Activated CD4-positive, alpha-beta T cell treated with anti-CD3 and anti-CD28 coated beads for 36 hours (primary cell): ENCODE measurements at regions of chr19 and their contacts with region 1.

Region 1: DNA sequence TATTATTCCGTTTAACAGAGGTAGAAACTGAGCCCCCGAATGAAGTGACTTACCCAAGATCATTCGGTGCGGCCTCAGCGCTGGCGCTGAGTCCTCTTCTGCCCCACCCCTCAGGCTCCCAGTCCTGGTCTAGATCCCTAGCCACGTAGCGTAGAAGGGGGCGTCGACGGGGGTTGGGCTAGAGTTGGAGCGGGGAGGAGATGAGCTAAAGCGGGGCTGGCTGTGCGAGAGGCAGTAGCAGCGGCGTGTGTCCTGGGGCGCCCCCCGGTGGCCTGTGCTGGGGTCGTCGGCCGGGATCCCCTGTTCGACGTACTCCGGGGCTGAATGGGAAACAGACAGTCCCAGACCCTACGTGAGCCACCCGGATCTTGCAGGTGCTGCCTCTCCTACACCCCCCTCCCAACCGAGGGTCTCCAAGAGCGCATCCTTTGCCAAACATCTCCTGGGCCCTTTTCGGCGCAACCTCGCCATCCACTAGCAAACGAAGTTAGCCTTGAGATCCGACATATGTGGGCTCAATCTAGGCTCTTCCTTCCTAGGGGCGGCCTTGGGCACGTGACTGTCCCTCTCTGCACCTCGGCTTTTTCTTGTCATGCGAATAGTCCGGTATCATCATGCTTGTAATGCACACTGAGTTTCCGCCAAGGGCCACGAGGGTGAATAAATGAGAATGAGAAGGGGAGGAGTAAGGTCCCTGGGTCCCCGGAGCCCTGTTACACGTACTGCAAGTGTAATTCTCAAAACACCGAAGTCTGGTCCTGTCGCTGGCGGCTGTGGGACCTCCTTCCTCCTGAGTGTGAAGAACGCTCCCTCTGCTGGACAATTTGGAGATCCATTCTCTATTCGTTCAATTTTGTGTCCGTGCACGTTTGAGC is 47.7 kb downstream of the CYP4F22 start:
- DNase-seq: peak; percentile 99
- ATAC-seq: peak; percentile 86
- H3K4me3 Mint-ChIP-seq: peak overlapping the region; percentile 73
- H3K27ac Mint-ChIP-seq: peak overlapping the region; percentile 85
- H3K4me1 Mint-ChIP-seq: peaks cover 18% of the 10 kb centered on the region
- H3K27me3 Mint-ChIP-seq: peaks cover 2% of the 10 kb centered on the region

Region 2: GRCh38 chr19:15177269-15178116 is 378.5 kb before region 1 on chr19:
- CTCF ChIA-PET with region 1: interaction called, 3 read pairs
- POLR2A ChIA-PET with region 1: no interaction called
- intact Hi-C with region 1: loop called (anchors 1 kb)
- DNase-seq: peak; percentile 92
- ATAC-seq: peak; percentile 98
- H3K4me3 Mint-ChIP-seq: peak overlapping the region; percentile 7
- H3K27ac Mint-ChIP-seq: no peak overlapping the region
- H3K4me1 Mint-ChIP-seq: peaks cover 4% of the 10 kb centered on the region
- H3K27me3 Mint-ChIP-seq: peaks cover 13% of the 10 kb centered on the region

Region 3: DNA sequence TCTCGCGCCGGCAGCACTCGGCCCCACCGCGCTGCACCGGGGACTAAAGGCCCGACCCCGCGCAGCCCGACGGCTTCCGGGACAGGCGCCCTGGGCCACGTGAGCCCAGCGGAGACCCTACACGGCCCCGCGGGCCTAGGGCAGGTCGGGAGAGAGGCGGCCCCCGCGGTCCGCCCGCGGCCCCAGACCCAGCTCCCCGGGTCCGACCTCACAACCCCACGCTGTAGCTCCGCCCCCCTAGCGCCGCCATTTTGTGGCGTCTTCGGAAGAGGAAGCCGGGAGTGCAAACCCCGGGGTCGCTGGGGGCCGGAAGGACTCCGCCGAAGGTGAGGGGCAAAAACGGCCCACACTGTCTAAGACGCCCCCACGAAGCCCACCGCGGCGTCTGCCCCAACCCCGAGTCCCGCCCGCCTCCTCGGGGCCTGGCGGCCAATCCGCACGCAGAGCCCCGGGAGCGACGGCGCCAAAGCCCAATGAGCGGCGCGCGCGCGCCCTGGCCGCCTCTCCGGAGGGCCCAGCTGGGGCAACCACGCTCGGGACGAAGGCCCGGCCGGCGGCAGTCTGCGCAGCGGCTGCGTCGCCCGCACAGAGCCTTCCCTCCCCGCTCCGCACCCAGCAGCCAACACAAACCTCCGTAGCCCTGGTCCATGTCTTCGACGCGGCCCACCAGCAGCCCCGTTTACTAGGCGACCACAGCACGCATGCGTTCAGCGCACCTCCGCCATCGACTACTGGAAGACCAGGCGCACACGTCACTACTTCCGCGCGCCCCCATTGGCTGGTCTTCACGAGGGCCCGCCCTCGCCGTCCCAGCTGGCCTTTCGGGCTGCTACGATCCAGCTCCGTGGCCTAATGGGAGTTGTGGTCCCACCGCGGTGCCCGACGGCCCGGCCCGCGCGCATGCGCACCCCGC is 176.7 kb before region 1 on chr19 and contains the start of gene AKAP8:
- CTCF ChIA-PET with region 1: interaction called, 22 read pairs
- POLR2A ChIA-PET with region 1: interaction called, 3 read pairs
- intact Hi-C with region 1: loop called (anchors 1 kb)
- DNase-seq: peak; percentile 99
- ATAC-seq: peak; percentile 91
- H3K4me3 Mint-ChIP-seq: peak within 1 kb of the TSS; percentile 88
- H3K27ac Mint-ChIP-seq: peak within 1 kb of the TSS; percentile 100
- H3K4me1 Mint-ChIP-seq: peaks cover 37% of the 10 kb centered on the region
- H3K27me3 Mint-ChIP-seq: no peaks in the 10 kb centered on the region
- total RNA-seq, gene AKAP8: 47.9 to 54.3 TPM

Region 4: GRCh38 chr19:15449620-15450527 is 106.1 kb before region 1 on chr19 and contains the start of gene WIZ:
- CTCF ChIA-PET with region 1: interaction called, 15 read pairs
- POLR2A ChIA-PET with region 1: interaction called, 3 read pairs
- intact Hi-C with region 1: no loop called
- DNase-seq: peak; percentile 90
- ATAC-seq: peak; percentile 68
- H3K4me3 Mint-ChIP-seq: peak within 1 kb of the TSS; percentile 55
- H3K27ac Mint-ChIP-seq: peak within 1 kb of the TSS; percentile 79
- H3K4me1 Mint-ChIP-seq: peaks cover 17% of the 10 kb centered on the region
- H3K27me3 Mint-ChIP-seq: no peaks in the 10 kb centered on the region
- total RNA-seq, gene WIZ: 21.2 to 22.6 TPM

Region 5: GRCh38 chr19:15769585-15769984 is 213.6 kb after region 1 on chr19:
- CTCF ChIA-PET with region 1: no interaction called
- POLR2A ChIA-PET with region 1: no interaction called
- intact Hi-C with region 1: no loop called
- DNase-seq: peak; percentile 29
- ATAC-seq: no peak
- H3K4me3 Mint-ChIP-seq: no peak overlapping the region
- H3K27ac Mint-ChIP-seq: no peak overlapping the region
- H3K4me1 Mint-ChIP-seq: no peaks in the 10 kb centered on the region
- H3K27me3 Mint-ChIP-seq: peaks cover 26% of the 10 kb centered on the region